Naive thymus-derived CD4-positive, alpha-beta T cell (primary cell): ENCODE measurements at regions of chr11 and their contacts with region 1.

Region 1: GRCh38 chr11:33015621-33016551 is at the start of gene DEPDC7:
- DNase-seq: peak; percentile 72 to 84 (median 81)
- ATAC-seq: peak; percentile 90
- H3K4me3 ChIP-seq: peak within 1 kb of the TSS; percentile 65
- H3K4me3 Mint-ChIP-seq: peak within 1 kb of the TSS; percentile 86 to 93 (median 90)
- H3K27ac ChIP-seq: peak within 1 kb of the TSS; percentile 50
- H3K27ac Mint-ChIP-seq: peak within 1 kb of the TSS in 6 of 9 donors; percentile 63 to 77 (median 69)
- H3K4me1 ChIP-seq: peaks cover 14 to 23% of the 10 kb centered on the region in 2 donors
- H3K4me1 Mint-ChIP-seq: peaks cover 14 to 73% (median 58%) of the 10 kb centered on the region in 7 donors
- H3K27me3 ChIP-seq: peaks cover 0 to 7% of the 10 kb centered on the region in 2 donors
- H3K27me3 Mint-ChIP-seq: peaks cover 0 to 74% (median 5%) of the 10 kb centered on the region in 5 donors
- total RNA-seq, gene DEPDC7: 0.65 to 9.6 (median 2.1) TPM

Region 2: GRCh38 chr11:32920570-32920969 is 95.3 kb before region 1 on chr11:
- CTCF ChIA-PET with region 1: no interaction called
- POLR2A ChIA-PET with region 1: no interaction called
- intact Hi-C with region 1: no loop called
- DNase-seq: no peak
- ATAC-seq: no peak
- H3K4me3 ChIP-seq: no peak overlapping the region
- H3K4me3 Mint-ChIP-seq: no peak overlapping the region
- H3K27ac ChIP-seq: no peak overlapping the region
- H3K27ac Mint-ChIP-seq: no peak overlapping the region
- H3K4me1 ChIP-seq: peaks cover 0 to 8% of the 10 kb centered on the region in 2 donors
- H3K4me1 Mint-ChIP-seq: peaks cover 7 to 26% (median 18%) of the 10 kb centered on the region in 7 donors
- H3K27me3 ChIP-seq: no peaks in the 10 kb centered on the region
- H3K27me3 Mint-ChIP-seq: no peaks in the 10 kb centered on the region

Region 3: DNA sequence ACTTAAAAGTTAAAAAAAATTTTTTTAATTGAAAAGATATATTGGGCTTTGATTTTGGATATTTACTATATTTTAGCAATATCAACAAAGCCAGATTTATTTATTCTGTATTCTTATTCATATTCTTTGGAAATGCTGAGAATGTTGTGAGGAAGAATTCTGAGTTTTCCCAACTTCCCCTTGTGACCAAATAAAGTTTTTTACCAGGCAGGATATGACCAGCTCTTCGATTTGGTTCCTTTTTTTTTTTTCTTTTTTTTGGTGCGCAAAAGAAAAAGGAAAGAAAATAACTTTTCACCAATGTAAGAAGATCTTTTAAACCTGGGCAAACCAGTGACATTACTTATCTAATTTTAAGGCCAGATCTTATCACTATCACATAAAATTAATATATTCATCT is 36.3 kb after region 1 on chr11:
- CTCF ChIA-PET with region 1: no interaction called
- POLR2A ChIA-PET with region 1: no interaction called
- intact Hi-C with region 1: loop called in 1 of 2 experiments (anchors 5 kb)
- DNase-seq: no peak
- ATAC-seq: no peak
- H3K4me3 ChIP-seq: no peak overlapping the region
- H3K4me3 Mint-ChIP-seq: no peak overlapping the region
- H3K27ac ChIP-seq: no peak overlapping the region
- H3K27ac Mint-ChIP-seq: no peak overlapping the region
- H3K4me1 ChIP-seq: no peaks in the 10 kb centered on the region
- H3K4me1 Mint-ChIP-seq: peaks cover 0 to 4% (median 0%) of the 10 kb centered on the region in 7 donors
- H3K27me3 ChIP-seq: no peaks in the 10 kb centered on the region
- H3K27me3 Mint-ChIP-seq: no peaks in the 10 kb centered on the region

Region 4: DNA sequence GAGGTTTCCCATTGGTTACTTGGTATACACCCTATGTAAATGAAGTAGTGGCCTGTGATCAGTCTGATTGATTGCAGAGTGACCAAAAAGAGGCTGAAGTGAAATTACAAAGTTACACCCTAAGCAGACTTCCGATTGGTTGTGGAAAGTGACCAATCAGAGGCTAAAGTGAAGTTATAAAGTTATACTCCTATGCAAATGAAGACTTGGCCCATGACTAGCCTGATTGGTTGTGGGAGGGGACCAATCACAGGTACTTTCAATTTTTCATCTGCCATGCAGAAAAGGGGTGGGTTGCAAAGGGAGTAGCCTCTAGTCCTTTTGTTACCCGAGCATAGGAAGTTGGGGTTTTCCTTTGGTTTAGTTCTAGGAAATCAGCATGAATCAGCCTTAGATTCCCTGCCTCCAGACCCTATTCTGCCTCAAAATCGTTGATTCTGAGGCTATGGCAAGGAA is 163.5 kb after region 1 on chr11:
- CTCF ChIA-PET with region 1: no interaction called
- POLR2A ChIA-PET with region 1: no interaction called
- intact Hi-C with region 1: no loop called
- DNase-seq: no peak
- ATAC-seq: no peak
- H3K4me3 ChIP-seq: no peak overlapping the region
- H3K4me3 Mint-ChIP-seq: peak overlapping the region in 1 of 10 donors; percentile 70
- H3K27ac ChIP-seq: no peak overlapping the region
- H3K27ac Mint-ChIP-seq: peak overlapping the region in 1 of 9 donors; percentile 64
- H3K4me1 ChIP-seq: no peaks in the 10 kb centered on the region
- H3K4me1 Mint-ChIP-seq: peaks cover 6 to 20% (median 10%) of the 10 kb centered on the region in 7 donors
- H3K27me3 ChIP-seq: no peaks in the 10 kb centered on the region
- H3K27me3 Mint-ChIP-seq: no peaks in the 10 kb centered on the region